Dendritic cell treated with granulocyte-macrophage colony-stimulating factor and Interleukin-4, amounts not matched to agents 40 ng/mL and 50 ng/mL, for 4 days (primary cell): ENCODE measurements at regions of chrX and their contacts with region 1.

Region 1: DNA sequence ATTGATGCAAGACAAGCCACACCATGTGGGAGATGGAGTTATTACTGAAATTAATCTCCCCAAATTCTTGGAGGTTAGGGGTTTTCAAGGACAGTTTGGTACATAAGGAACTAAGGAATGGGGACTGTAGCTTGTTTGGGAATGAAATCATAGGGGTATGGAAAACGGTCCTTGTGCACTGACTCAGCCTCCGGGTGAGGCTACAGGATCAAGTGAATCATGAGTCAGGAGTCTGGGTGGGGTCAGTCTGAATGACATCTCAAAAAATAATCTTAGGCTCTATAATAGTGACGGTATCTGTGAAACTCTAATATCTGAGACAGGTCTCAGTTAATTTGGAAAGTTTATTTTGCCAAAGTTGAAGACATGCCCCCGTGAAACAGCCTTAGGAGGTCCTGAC is 128.5 kb upstream of the CYSLTR1 start:
- H3K4me3 Mint-ChIP-seq: no peak overlapping the region
- H3K27ac Mint-ChIP-seq: no peak overlapping the region
- H3K4me1 Mint-ChIP-seq: no peaks in the 10 kb centered on the region
- H3K27me3 Mint-ChIP-seq: no peaks in the 10 kb centered on the region

Region 2: DNA sequence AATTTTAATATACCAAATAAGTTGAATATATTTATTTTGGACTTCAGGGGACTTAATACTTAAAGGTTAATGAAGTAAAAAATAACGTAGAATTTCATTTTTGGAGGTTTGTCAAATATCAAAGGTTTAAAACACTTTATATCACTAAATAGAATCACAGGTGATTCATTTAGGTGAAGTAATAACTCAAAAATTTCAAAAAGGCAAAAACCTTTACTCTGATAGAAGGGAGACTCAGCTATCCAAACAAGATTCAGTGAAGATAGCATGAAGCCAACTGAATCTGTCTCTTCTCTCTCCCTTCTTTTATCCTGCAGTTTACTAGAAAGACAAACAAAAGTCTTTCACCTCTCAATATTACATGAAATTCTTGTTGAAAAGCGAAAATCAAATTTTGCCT is 18.3 kb before region 1 on chrX:
- intact Hi-C with region 1: loop called (anchors 1 kb)
- H3K4me3 Mint-ChIP-seq: no peak overlapping the region
- H3K27ac Mint-ChIP-seq: no peak overlapping the region
- H3K4me1 Mint-ChIP-seq: no peaks in the 10 kb centered on the region
- H3K27me3 Mint-ChIP-seq: no peaks in the 10 kb centered on the region

Region 3: DNA sequence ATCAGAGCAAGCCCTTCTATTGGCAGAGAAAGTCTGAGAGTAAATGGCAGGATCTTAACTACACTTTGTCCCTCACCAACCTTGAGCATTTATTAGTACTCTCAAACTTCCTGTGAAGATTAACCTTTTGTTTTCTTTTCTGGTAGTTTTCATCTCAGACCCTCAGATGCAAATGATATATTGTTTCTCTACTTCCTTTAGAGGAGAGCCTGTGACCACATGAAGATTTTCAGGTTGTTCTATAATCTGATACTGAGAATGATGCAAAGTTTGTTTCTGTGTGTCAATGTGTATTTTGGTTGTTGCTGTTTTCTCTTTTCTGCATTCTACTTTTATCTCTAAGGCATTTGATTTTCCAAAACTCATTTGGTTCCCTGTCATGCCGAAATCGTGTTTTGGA is 37.3 kb after region 1 on chrX:
- intact Hi-C with region 1: no loop called
- H3K4me3 Mint-ChIP-seq: no peak overlapping the region
- H3K27ac Mint-ChIP-seq: no peak overlapping the region
- H3K4me1 Mint-ChIP-seq: no peaks in the 10 kb centered on the region
- H3K27me3 Mint-ChIP-seq: no peaks in the 10 kb centered on the region

Region 4: GRCh38 chrX:78931814-78932213 is 475.9 kb after region 1 on chrX:
- intact Hi-C with region 1: no loop called
- H3K4me3 Mint-ChIP-seq: no peak overlapping the region
- H3K27ac Mint-ChIP-seq: no peak overlapping the region
- H3K4me1 Mint-ChIP-seq: no peaks in the 10 kb centered on the region
- H3K27me3 Mint-ChIP-seq: no peaks in the 10 kb centered on the region